ENCODE measurements at regions of chr1 and their contacts with region 1.

Region 1: DNA sequence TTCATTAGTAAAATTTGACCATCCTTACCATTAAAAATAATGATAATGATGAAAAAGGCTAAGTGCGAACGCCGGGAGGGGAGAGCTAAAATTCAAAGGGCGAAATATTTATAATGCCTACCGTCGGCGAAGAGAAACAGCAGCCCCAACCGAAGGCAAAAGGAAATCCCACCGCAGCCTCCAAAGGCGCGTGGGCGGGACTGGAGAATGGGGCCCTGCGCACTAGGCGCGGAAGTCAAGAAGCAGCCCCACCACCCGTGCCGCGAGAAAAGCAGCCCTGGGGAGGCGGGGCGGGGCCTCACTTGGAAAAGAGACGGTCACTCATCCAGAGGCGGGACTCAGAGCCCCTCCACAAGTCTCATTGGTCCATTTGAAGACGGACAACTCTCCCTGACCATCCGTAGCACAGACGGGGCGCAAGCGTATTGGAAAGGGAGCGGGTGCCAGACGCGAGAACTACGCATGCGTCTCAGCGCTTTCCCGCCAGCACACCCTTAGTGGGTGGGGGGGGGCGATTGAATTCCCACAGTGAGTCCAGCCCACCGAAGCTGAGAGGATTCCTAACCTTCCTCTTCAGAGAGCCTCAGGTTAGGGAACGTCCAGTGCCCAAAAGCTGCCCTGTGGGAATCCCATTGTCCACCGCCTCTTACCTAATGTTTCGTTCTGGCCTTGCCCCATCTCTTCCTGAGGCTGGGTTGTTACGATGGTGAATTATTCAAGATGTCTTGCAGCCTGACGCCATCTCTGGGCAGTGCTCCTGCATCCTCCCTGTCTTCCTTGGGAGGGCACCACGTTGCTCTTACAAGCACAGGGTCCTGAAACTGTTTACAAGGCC is 19.0 kb downstream of the MTX1 start:
- DNase-seq: peak; percentile 96
- ATAC-seq: peak; percentile 95
- H3K4me3 ChIP-seq: peak overlapping the region; percentile 67
- H3K27ac ChIP-seq: peak overlapping the region; percentile 96
- H3K4me1 ChIP-seq: peaks cover 36% of the 10 kb centered on the region
- H3K27me3 ChIP-seq: no peaks in the 10 kb centered on the region
- CTCF ChIP-seq: no peak
- EP300 ChIP-seq: 0 out of 4 replicates have a peak, but pooled peaks of 1 of the 2 experiments have one; percentile 16
- POLR2A ChIP-seq: peak; percentile 79
- RAD21 ChIP-seq: no peak

Region 2: DNA sequence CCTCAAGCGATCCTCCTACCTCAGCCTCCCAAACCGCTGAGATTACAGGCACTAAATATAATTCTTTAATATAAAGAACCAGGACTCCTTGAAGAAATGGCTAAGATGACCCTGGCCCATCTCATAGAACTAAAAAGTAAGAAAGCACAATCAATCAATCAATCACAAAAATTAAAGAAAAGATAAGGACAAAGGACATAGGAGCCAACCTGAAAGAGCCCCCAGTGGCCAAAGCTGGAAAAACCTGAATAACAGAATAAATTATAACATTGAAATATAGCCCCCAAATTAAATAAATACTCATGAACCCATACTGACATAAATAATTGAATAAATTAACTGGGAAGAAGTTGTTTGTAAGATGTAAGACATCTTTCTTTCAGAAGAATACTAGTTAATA is 1081.5 kb before region 1 on chr1:
- CTCF ChIA-PET with region 1: no interaction called
- POLR2A ChIA-PET with region 1: no interaction called
- RAD21 ChIA-PET with region 1: no interaction called
- SMC1A ChIA-PET with region 1: no interaction called
- in situ Hi-C with region 1: no loop called
- intact Hi-C with region 1: no loop called
- DNase-seq: no peak
- ATAC-seq: 0 out of 3 replicates have a peak, but pooled peaks have one; percentile 29
- H3K4me3 ChIP-seq: no peak overlapping the region
- H3K27ac ChIP-seq: no peak overlapping the region
- H3K4me1 ChIP-seq: no peaks in the 10 kb centered on the region; the same call in 1 of the 2 replicates
- H3K27me3 ChIP-seq: no peaks in the 10 kb centered on the region
- CTCF ChIP-seq: peak; percentile 9 to 42 (median 42); a peak in 4 of 6 replicates
- EP300 ChIP-seq: no peak
- POLR2A ChIP-seq: no peak
- RAD21 ChIP-seq: no peak

Region 3: GRCh38 chr1:155193275-155193990 is 34.0 kb before region 1 on chr1:
- CTCF ChIA-PET with region 1: interaction called, 61 read pairs
- POLR2A ChIA-PET with region 1: interaction called, 28 read pairs
- RAD21 ChIA-PET with region 1: interaction called, 18 read pairs
- SMC1A ChIA-PET with region 1: interaction called, 7 read pairs
- in situ Hi-C with region 1: no loop called
- intact Hi-C with region 1: no loop called
- DNase-seq: no peak
- ATAC-seq: peak; percentile 93
- H3K4me3 ChIP-seq: peak overlapping the region; percentile 77
- H3K27ac ChIP-seq: peak overlapping the region; percentile 22
- H3K4me1 ChIP-seq: peaks cover 16% of the 10 kb centered on the region
- H3K27me3 ChIP-seq: no peaks in the 10 kb centered on the region
- CTCF ChIP-seq: peak; percentile 96 to 99 (median 99)
- EP300 ChIP-seq: no peak
- POLR2A ChIP-seq: peak; percentile 47; the same call in 1 of the 2 replicates
- RAD21 ChIP-seq: peak; percentile 68

Region 4: GRCh38 chr1:155202731-155203505 is 24.6 kb before region 1 on chr1:
- CTCF ChIA-PET with region 1: interaction called, 154 read pairs
- POLR2A ChIA-PET with region 1: interaction called, 84 read pairs
- RAD21 ChIA-PET with region 1: interaction called, 85 read pairs
- SMC1A ChIA-PET with region 1: interaction called, 89 read pairs
- in situ Hi-C with region 1: no loop called
- intact Hi-C with region 1: loop called (anchors 1 kb)
- DNase-seq: no peak
- ATAC-seq: no peak
- H3K4me3 ChIP-seq: no peak overlapping the region
- H3K27ac ChIP-seq: no peak overlapping the region
- H3K4me1 ChIP-seq: peaks cover 5% of the 10 kb centered on the region
- H3K27me3 ChIP-seq: no peaks in the 10 kb centered on the region; a peak in 1 of 4 replicates
- CTCF ChIP-seq: no peak
- EP300 ChIP-seq: no peak
- POLR2A ChIP-seq: no peak
- RAD21 ChIP-seq: no peak